ENCODE measurements at regions of chr15 and their contacts with region 1.

Region 1: DNA sequence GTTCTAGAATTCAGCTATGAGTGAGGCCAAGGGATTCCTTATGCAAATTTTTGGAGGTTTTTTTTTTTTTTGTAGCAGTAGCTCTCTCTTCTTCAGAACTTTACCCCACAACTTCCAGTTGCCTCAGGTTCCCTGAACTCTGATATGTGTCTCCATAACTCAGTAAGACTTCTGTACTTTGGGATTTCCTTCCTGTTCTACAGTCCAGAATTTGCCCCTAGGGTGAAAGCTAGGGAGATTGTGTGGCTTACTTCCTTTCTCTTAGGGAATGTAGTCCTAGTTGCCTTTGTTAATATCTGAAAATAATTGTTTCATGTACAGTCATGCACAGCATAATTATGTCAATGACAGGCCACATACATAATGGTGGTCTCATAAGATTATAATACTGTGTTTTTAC is 30.8 kb downstream of the LRRC28 start:
- DNase-seq: no peak
- H3K4me3 Mint-ChIP-seq: no peak overlapping the region
- H3K27ac Mint-ChIP-seq: no peak overlapping the region
- H3K4me1 Mint-ChIP-seq: no peaks in the 10 kb centered on the region
- H3K27me3 Mint-ChIP-seq: no peaks in the 10 kb centered on the region
- CTCF ChIP-seq: no peak

Region 2: DNA sequence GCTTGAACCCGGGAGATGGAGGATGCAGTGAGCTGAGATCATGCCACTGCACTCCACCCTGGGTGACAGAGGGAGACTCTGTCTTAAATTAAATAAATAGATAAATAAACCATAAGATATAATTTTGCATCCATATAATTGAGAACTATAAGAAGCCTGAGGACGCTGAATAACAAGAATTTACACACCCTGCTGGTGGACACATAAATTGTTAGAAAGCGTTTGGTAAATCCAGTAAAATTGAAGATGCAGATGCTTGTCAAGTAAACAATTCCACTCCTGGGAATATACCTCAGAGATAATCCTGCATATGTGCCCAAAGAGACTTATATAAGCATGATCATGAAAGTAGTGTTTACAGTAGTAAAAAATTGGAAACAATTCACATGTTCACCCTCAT is 74.4 kb before region 1 on chr15:
- CTCF ChIA-PET with region 1: no interaction called
- POLR2A ChIA-PET with region 1: no interaction called
- intact Hi-C with region 1: no loop called
- DNase-seq: no peak
- H3K4me3 Mint-ChIP-seq: no peak overlapping the region
- H3K27ac Mint-ChIP-seq: no peak overlapping the region
- H3K4me1 Mint-ChIP-seq: peaks cover 6% of the 10 kb centered on the region
- H3K27me3 Mint-ChIP-seq: no peaks in the 10 kb centered on the region
- CTCF ChIP-seq: no peak

Region 3: DNA sequence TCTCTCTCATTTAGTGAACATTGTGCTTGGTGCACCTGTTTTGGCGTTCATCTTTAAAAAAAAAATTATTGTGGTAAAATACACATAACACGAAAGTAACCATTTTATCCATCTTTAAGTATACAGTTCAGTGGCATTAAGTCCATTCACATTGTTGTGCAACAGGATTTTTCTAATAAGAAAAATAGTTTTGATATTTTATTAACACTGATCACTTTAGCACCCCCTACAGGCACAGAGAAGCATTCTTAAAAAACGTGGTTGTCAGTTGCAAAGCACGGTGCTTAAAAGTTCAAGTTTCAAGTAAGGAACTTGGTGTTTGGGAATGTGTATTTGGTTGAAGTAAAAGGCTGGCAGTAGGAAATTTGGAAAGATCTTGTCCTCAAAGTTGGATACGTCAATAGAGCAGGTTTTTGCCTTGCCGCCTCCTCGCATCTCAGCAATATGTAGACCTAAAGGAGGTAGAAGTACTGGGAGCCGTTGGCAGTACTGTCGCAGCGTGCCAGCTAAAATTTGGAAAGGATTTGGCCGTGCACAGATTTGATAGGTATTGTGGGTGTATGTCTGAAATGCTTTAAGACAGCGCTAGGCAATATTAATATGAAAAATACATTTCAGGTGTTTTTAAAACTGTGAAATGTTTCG is 79.5 kb after region 1 on chr15:
- CTCF ChIA-PET with region 1: interaction called, 9 read pairs
- POLR2A ChIA-PET with region 1: interaction called, 3 read pairs
- intact Hi-C with region 1: loop called (anchors 1 kb)
- DNase-seq: peak; percentile 38
- H3K4me3 Mint-ChIP-seq: no peak overlapping the region
- H3K27ac Mint-ChIP-seq: no peak overlapping the region
- H3K4me1 Mint-ChIP-seq: no peaks in the 10 kb centered on the region
- H3K27me3 Mint-ChIP-seq: no peaks in the 10 kb centered on the region
- CTCF ChIP-seq: peak; percentile 35

Region 4: GRCh38 chr15:99371180-99372103 is 89.3 kb after region 1 on chr15:
- CTCF ChIA-PET with region 1: interaction called, 29 read pairs
- POLR2A ChIA-PET with region 1: interaction called, 6 read pairs
- intact Hi-C with region 1: loop called (anchors 1 kb)
- DNase-seq: peak; percentile 11
- H3K4me3 Mint-ChIP-seq: no peak overlapping the region
- H3K27ac Mint-ChIP-seq: peak overlapping the region; percentile 90
- H3K4me1 Mint-ChIP-seq: peaks cover 8% of the 10 kb centered on the region
- H3K27me3 Mint-ChIP-seq: no peaks in the 10 kb centered on the region
- CTCF ChIP-seq: peak; percentile 24

Measured in MCF 10A (cell line).